Cardiac septum (tissue), 1 donor: ENCODE measurements at regions of chr11 and their contacts with region 1.

Region 1: GRCh38 chr11:11211186-11211585 is 141.9 kb downstream of the CSNK2A3 start:
- DNase-seq: no peak

Region 2: DNA sequence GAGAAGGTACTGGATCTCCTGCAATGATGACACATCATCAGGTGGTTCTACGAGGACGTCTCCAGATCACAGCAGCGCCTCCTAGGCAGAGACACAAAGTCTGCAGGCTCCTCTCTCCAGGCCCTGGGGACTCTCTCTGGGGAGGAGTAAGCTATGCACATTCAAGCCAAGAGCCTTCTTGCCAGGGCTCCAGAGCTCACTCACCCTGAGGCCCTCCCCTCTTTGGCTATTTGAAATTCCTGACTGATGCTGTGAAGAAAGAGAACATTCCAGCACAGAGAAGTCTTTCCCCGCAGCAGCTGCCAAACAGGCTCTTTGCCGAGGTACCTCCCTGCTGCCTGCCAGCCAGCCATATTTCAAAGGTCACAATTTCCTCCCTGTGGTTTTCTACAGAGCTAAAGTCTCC is 63.1 kb before region 1 on chr11:
- intact Hi-C with region 1: loop called (anchors 2 kb)
- DNase-seq: peak; percentile 83

Region 3: GRCh38 chr11:11538277-11538960 is 327.2 kb after region 1 on chr11:
- intact Hi-C with region 1: no loop called
- DNase-seq: peak; percentile 89